Dendritic cell treated with granulocyte-macrophage colony-stimulating factor and Interleukin-4, amounts not matched to agents 40 ng/mL and 50 ng/mL, for 4 days (primary cell): ENCODE measurements at regions of chr10 and their contacts with region 1.

Region 1: DNA sequence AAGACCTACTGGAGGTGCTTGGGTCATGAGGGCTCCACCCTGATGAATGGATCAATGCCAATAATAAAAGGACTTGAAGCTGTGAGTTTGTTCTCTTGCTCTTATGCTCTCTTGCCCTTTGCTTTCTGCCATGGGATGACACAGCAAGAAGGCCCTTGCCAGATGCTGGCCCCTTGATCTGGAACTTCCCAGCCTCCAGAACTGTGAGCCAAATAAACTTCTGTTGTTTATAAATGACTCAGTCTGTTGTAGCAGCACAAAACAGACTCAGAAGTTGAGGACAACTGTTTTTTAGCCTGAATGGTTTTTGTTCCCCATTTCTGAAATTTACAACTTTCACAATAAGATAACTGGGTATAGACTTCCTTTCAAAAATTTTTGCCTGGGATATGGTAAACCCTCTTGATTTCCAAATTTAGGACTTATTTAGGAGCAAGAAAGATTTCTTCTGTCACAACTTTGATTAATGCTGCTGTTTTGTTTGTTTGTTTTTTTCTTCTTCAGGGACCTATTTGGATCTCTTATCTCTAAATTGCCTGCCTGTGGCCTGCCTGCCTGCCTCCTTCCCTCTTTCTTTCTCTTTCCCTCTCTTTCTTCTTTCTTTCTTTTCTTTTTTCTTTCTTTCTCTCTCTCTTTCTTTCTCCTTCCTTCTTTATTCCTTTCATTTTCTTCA is 12.1 kb downstream of the ENTPD1 start:
- H3K4me3 Mint-ChIP-seq: peak overlapping the region; percentile 2
- H3K27ac Mint-ChIP-seq: peak overlapping the region; percentile 87
- H3K4me1 Mint-ChIP-seq: peaks cover 54% of the 10 kb centered on the region
- H3K27me3 Mint-ChIP-seq: no peaks in the 10 kb centered on the region

Region 2: DNA sequence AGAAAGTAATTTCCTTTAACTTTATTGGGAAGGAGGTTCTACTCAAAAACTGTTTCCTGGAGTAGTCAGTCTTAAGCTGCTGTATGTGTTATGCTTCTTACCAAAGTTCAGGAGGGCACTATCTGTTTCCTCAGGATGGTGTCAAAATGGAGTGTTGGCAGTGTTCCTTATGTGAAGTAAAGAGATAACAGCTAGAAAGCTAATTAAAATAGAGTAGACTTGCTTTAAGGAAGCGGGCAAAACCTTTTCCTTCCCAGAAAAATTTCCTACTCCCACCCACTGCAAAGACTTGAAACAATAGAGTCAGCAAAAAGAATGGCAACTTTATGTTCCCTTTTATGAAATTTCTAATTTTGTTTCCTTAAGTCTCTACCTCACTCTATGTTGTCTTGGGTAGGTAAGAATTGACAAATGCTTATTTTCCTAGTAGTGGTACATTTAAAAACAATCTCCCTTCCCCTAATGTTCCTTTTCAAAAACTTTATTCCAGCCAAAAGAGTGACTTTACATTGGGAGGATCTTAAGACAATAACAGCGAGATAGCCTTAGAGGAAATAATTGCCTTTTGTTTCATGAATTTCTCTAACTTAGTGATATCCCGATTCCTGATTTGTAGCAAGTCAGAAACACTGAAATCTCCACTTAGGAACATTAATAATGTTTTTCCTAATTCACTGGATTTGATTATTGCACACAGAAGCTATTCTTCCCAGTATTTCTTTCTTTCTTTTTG is 38.5 kb before region 1 on chr10:
- intact Hi-C with region 1: loop called (anchors 5 kb)
- H3K4me3 Mint-ChIP-seq: no peak overlapping the region
- H3K27ac Mint-ChIP-seq: peak overlapping the region; percentile 85
- H3K4me1 Mint-ChIP-seq: peaks cover 25% of the 10 kb centered on the region
- H3K27me3 Mint-ChIP-seq: no peaks in the 10 kb centered on the region

Region 3: DNA sequence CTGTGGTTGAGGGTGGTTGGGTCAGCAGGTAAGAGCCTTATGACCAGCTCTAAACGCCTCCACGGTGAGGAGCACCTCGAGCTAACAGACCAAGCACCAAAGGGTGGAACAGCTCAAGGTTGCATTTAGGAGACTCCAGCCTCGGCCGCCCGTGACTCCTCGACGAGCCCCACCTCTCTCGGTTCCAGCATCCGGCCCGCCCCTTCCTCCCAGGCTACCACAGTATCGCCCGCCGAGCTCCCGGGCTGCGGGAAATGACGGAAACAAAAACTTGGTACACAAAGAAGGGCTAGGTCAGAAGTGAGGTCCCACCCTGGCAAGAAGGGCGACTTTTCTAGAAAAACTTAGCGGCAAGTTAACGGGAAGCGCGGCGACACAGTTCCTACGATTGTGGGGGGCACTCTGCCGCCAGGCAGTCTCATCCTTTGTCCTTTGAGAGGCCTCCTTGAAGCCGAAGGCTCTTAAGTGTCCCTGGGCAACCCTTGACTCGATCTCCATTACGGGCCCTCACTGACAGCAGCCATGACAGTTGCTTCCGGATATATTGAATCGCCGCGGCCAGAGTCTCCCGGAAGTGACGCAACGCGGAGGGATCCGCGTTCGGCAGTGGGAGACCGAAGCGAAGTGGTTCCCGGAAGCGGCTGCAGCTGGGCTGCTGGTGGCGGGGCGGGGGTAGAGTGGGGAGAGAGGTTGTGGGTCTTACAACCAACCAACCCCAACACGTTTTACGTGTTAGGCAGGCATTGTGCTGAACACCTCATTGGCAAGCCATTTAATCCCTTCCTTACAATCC is 321.8 kb after region 1 on chr10:
- intact Hi-C with region 1: no loop called
- H3K4me3 Mint-ChIP-seq: peak overlapping the region; percentile 81
- H3K27ac Mint-ChIP-seq: peak overlapping the region; percentile 98
- H3K4me1 Mint-ChIP-seq: no peaks in the 10 kb centered on the region
- H3K27me3 Mint-ChIP-seq: peaks cover 27% of the 10 kb centered on the region